Activated CD8-positive, alpha-beta T cell treated with anti-CD3 and anti-CD28 coated beads, Interleukin-2, amount 10 ng/mL, durations not matched to agents 7 days and 5 days (primary cell): ENCODE measurements at regions of chr11 and their contacts with region 1.

Region 1: GRCh38 chr11:2532704-2533586 is 88.1 kb downstream of the KCNQ1 start:
- DNase-seq: peak; percentile 96
- ATAC-seq: peak; percentile 88
- H3K4me3 Mint-ChIP-seq: peak overlapping the region; percentile 70
- H3K27ac Mint-ChIP-seq: peak overlapping the region; percentile 67
- H3K4me1 Mint-ChIP-seq: peaks cover 32% of the 10 kb centered on the region
- H3K27me3 Mint-ChIP-seq: no peaks in the 10 kb centered on the region

Region 2: DNA sequence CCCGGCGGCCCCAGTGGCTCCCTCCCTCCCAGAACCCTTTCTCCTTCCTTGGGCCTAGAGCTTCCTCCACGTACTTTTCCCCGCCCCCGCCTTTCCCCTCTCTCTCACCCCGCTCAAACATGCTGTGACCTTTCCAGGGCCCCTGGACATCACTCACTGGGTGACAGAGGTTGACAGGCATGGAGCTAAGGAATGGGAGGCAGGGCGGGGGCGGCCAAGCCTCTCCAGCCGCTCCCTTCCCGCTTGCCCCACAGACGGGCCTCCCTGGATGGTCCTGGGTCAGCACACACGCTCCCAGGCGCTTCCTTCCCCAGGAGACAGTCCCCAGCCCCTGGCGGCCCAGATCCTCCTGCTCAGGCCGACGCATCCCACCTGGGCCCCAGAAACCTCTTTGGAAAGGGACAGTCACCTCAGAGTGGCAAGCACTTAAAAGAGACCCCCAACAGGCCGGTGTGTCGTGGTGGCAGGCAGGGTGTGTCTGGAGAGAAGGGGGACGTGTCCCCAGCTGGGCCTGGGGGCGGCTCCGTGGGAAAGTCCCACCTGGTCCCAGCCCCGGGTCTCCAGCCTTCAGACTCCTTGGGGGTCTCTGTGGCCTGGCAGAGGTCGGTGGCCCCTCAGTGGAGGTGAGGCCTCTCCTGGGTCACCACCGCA is 544.2 kb before region 1 on chr11:
- CTCF ChIA-PET with region 1: no interaction called
- POLR2A ChIA-PET with region 1: no interaction called
- DNase-seq: no peak
- ATAC-seq: no peak
- H3K4me3 Mint-ChIP-seq: no peak overlapping the region
- H3K27ac Mint-ChIP-seq: no peak overlapping the region
- H3K4me1 Mint-ChIP-seq: no peaks in the 10 kb centered on the region
- H3K27me3 Mint-ChIP-seq: no peaks in the 10 kb centered on the region

Region 3: DNA sequence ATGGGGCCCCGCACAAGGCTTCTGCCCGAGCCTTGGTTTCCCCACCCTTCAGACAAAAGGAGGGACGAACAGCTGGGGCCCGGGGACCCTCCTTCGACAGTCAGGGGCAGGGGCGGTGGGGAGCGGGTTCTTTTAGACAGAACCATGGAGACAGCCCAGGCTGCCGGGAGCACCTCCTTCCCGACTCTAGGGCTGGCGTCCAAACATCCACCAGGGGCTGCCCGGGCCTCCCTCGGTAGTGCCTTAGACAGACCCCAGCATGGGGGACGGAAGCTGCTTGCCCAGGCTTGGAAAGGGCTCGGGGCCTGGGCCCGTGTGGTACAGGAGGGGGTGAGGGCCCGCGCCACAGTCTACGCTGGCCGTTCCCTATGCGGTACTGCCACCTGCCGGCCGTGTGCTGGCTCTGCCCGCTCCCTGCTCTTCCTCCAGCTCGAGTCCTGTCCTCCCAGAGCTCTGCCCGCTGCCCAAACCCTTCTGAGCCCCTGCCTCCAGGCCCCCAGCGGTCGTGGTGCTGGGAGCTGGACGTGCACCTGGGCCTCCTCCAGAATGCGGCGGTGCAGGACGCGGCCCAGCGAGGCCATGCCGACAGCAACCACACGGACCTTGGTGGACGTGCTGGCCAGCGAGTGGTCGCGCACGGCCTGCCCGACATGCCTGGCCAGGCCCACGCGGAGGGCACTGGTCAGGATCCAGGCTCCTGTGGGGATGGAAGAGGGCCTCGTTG is 112.3 kb before region 1 on chr11:
- CTCF ChIA-PET with region 1: interaction called, 76 read pairs
- POLR2A ChIA-PET with region 1: no interaction called
- DNase-seq: peak; percentile 78
- ATAC-seq: peak; percentile 93
- H3K4me3 Mint-ChIP-seq: no peak overlapping the region
- H3K27ac Mint-ChIP-seq: no peak overlapping the region
- H3K4me1 Mint-ChIP-seq: no peaks in the 10 kb centered on the region
- H3K27me3 Mint-ChIP-seq: no peaks in the 10 kb centered on the region

Region 4: GRCh38 chr11:2436521-2437031 is 96.4 kb before region 1 on chr11:
- CTCF ChIA-PET with region 1: interaction called, 11 read pairs
- POLR2A ChIA-PET with region 1: no interaction called
- DNase-seq: no peak
- ATAC-seq: no peak
- H3K4me3 Mint-ChIP-seq: no peak overlapping the region
- H3K27ac Mint-ChIP-seq: no peak overlapping the region
- H3K4me1 Mint-ChIP-seq: peaks cover 11% of the 10 kb centered on the region
- H3K27me3 Mint-ChIP-seq: peaks cover 13% of the 10 kb centered on the region

Region 5: DNA sequence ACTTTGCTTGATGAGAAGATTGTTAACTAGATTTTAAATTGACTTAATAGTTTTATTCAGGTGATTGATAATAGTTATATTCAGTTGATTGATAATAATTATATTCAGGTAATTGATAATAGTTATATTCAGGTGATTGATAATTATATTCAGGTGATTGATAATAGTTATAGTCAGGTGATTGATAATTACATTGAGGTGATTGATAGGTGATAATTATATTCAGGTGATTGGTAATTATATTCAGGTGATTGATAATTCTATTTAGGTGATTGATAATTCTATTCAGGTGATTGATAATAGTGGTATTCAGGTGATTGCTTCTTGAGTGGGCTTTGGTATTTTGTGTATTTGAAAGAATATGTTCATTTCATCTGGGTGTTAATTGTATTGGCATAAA is 12.5 kb after region 1 on chr11:
- CTCF ChIA-PET with region 1: interaction called, 10 read pairs
- POLR2A ChIA-PET with region 1: no interaction called
- DNase-seq: no peak
- ATAC-seq: no peak
- H3K4me3 Mint-ChIP-seq: no peak overlapping the region
- H3K27ac Mint-ChIP-seq: no peak overlapping the region
- H3K4me1 Mint-ChIP-seq: peaks cover 7% of the 10 kb centered on the region
- H3K27me3 Mint-ChIP-seq: no peaks in the 10 kb centered on the region

Region 6: DNA sequence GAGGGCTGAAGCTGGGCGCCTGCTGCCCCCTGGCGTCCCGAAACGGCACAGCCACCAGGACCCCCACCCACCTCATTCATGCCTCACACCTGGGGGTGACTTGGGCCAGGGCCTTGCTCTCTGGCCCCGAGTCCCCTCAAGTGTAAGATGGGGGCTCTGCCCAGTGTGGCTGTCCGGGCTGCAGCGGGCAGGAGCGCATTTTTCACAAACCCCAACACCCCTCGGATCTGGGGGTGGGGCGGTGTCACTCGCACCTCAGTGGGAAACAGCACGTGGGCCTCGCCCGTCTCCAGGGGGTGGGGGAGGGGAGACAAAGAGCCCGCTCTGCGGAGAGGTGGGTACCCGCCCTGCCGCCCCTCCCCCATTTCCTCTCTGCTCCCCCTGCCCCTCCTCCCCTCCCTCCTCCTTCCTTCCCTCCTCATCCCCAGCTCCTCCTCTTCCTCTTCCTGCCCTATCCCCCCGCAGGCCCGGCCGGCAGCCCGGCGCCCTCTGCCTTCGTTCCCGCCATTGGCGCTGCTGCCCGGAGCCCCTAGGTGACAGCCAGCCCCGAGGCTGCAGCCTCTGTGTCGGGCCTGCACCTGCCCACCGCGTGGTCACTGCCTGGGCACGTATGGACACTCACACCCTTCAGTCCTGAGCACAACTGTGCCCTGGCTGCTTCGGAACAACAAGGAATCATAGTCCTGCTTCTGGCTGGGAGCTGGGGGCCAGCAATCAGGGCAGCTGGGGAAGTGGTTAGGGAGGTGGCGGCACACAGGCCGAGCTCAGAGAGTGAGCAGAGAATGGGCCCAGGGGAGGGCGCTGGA is 359.5 kb after region 1 on chr11:
- CTCF ChIA-PET with region 1: interaction called, 485 read pairs
- POLR2A ChIA-PET with region 1: interaction called, 22 read pairs
- DNase-seq: peak; percentile 86
- ATAC-seq: peak; percentile 70
- H3K4me3 Mint-ChIP-seq: peak overlapping the region; percentile 80
- H3K27ac Mint-ChIP-seq: peak overlapping the region; percentile 92
- H3K4me1 Mint-ChIP-seq: peaks cover 34% of the 10 kb centered on the region
- H3K27me3 Mint-ChIP-seq: peaks cover under 1% of the 10 kb centered on the region

Region 7: GRCh38 chr11:3021125-3021524 is 488.2 kb after region 1 on chr11:
- CTCF ChIA-PET with region 1: interaction called, 19 read pairs
- POLR2A ChIA-PET with region 1: no interaction called
- DNase-seq: peak; percentile 64
- ATAC-seq: peak; percentile 68
- H3K4me3 Mint-ChIP-seq: no peak overlapping the region
- H3K27ac Mint-ChIP-seq: peak overlapping the region; percentile 53
- H3K4me1 Mint-ChIP-seq: peaks cover 75% of the 10 kb centered on the region
- H3K27me3 Mint-ChIP-seq: no peaks in the 10 kb centered on the region